Activated T-helper 1 cell treated with anti-CD3 and anti-CD28 coated beads, Interleukin-12 subunit alpha, Interleukin-12 subunit beta, Interleukin-2, Interleukin-4 antibody, amounts not matched to agents 30 ng/mL and 10 ng/mL and 1 ng/mL, durations not matched to agents 14 hours and 24 hours and 36 hours (primary cell): ENCODE measurements at regions of chr12 and their contacts with region 1.

Region 1: GRCh38 chr12:92570056-92570753 is 132.6 kb upstream of the PLEKHG7 start:
- DNase-seq: peak; percentile 36
- H3K4me3 Mint-ChIP-seq: no peak overlapping the region
- H3K27ac Mint-ChIP-seq: no peak overlapping the region
- H3K4me1 Mint-ChIP-seq: peaks cover 49% of the 10 kb centered on the region
- H3K27me3 Mint-ChIP-seq: no peaks in the 10 kb centered on the region

Region 2: GRCh38 chr12:91382081-91382543 is 1188.1 kb before region 1 on chr12:
- intact Hi-C with region 1: loop called (anchors 1 kb)
- DNase-seq: peak; percentile 68
- H3K4me3 Mint-ChIP-seq: peak overlapping the region; percentile 76
- H3K27ac Mint-ChIP-seq: no peak overlapping the region
- H3K4me1 Mint-ChIP-seq: peaks cover 10% of the 10 kb centered on the region
- H3K27me3 Mint-ChIP-seq: peaks cover 5% of the 10 kb centered on the region

Region 3: DNA sequence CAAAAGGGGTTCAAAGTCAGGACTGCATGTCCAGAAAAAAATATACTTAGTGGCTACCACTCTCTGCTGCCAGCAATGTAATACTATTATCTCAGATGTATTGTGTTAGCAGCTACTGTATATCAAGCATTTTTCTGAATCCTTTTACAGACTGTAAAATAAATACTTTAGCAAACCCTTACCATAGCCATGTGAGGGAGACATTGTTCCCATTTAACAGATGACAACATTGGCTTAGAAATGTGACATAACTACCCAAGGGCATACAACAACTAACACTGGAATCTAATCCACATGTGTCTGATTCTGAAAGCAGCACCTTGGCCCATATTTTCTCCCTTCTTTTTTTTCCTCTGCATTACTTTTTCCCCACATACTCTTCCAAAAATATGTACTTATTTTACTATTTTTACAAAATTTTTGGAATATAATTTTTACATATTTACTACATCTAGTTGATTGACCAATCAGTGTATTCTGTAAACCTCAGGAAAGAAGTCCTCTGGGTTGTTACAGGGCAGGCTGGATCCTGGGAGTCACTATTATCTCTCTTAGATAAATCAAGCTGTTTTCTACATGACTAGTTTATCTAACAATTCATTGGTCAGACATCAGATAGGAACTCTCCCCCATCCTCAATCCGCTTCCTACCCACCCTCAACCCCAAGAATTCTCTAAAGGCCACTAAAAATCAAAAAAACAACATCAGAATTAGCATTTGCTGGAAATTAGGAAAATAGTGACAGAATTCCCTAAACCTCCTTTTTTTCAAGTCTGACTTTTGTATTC is 578.6 kb before region 1 on chr12:
- intact Hi-C with region 1: loop called (anchors 5 kb)
- DNase-seq: no peak
- H3K4me3 Mint-ChIP-seq: no peak overlapping the region
- H3K27ac Mint-ChIP-seq: no peak overlapping the region
- H3K4me1 Mint-ChIP-seq: peaks cover 4% of the 10 kb centered on the region
- H3K27me3 Mint-ChIP-seq: no peaks in the 10 kb centered on the region

Region 4: GRCh38 chr12:92094751-92095161 is 475.4 kb before region 1 on chr12:
- intact Hi-C with region 1: no loop called
- DNase-seq: no peak
- H3K4me3 Mint-ChIP-seq: no peak overlapping the region
- H3K27ac Mint-ChIP-seq: no peak overlapping the region
- H3K4me1 Mint-ChIP-seq: peaks cover 15% of the 10 kb centered on the region
- H3K27me3 Mint-ChIP-seq: peaks cover 2% of the 10 kb centered on the region

Region 5: DNA sequence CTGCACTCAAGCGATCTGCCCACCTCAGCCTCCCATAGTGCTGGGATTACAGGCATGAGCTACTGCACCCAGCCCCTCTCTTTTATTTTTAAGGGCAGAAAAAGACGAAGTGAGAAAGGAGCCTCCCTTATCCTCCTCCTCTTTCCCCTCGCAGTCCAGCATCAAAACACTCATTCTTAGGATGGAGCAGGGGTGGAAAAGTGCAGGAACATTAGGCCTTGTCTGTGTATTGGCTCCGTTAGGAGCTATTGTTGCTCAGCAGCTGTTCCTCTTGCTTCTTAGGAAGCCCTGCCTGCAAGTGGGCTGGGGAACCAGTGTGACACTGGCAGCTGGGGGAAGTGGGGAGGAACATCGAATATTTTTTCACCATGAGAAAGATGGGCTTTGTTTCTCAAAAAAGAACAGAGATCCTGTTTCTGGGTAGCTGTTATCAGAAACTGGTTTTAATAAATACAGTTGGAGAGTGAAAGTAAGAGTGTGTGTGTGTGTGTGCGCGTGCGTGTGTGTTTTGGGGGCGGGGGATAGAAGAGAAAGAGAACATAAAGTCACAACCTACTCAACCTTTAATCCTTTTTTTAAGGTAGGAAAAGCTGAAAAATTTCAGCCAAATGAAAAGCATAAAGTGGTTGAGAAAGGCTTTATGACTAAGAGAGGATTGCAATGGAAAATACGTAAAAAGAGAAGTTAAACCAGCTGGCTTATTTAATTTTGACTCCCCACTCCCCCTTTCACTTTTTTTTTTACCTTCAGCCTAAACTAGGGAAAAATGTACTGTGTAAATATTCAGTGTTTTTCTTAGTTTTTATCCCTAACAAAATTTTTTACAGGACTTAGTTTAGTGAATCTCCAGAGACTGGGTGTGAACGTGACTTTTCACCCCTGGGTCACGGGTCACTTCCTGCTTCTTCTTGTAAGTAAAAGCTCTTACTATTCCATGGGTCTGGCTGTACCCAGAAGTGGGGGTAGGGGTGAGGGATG is 64.7 kb before region 1 on chr12:
- intact Hi-C with region 1: loop called (anchors 1 kb)
- DNase-seq: peak; percentile 13
- H3K4me3 Mint-ChIP-seq: peak overlapping the region; percentile 77
- H3K27ac Mint-ChIP-seq: peak overlapping the region; percentile 93
- H3K4me1 Mint-ChIP-seq: peaks cover 47% of the 10 kb centered on the region
- H3K27me3 Mint-ChIP-seq: no peaks in the 10 kb centered on the region

Region 6: GRCh38 chr12:92593734-92594402 is 23.7 kb after region 1 on chr12:
- intact Hi-C with region 1: loop called (anchors 2 kb)
- DNase-seq: peak; percentile 79
- H3K4me3 Mint-ChIP-seq: peak overlapping the region; percentile 72
- H3K27ac Mint-ChIP-seq: peak overlapping the region; percentile 99
- H3K4me1 Mint-ChIP-seq: peaks cover 63% of the 10 kb centered on the region
- H3K27me3 Mint-ChIP-seq: no peaks in the 10 kb centered on the region